ENCODE measurements at regions of chr2 and their contacts with region 1.

Region 1: GRCh38 chr2:142951190-142952007 is 73.9 kb downstream of the KYNU start:
- DNase-seq: no peak
- ATAC-seq: no peak
- H3K4me3 ChIP-seq: no peak overlapping the region
- H3K4me3 Mint-ChIP-seq: no peak overlapping the region
- H3K27ac ChIP-seq: no peak overlapping the region
- H3K27ac Mint-ChIP-seq: no peak overlapping the region
- H3K4me1 ChIP-seq: no peaks in the 10 kb centered on the region
- H3K4me1 Mint-ChIP-seq: peaks cover 16% of the 10 kb centered on the region
- H3K27me3 ChIP-seq: no peaks in the 10 kb centered on the region
- H3K27me3 Mint-ChIP-seq: no peaks in the 10 kb centered on the region
- CTCF ChIP-seq: no peak

Region 2: DNA sequence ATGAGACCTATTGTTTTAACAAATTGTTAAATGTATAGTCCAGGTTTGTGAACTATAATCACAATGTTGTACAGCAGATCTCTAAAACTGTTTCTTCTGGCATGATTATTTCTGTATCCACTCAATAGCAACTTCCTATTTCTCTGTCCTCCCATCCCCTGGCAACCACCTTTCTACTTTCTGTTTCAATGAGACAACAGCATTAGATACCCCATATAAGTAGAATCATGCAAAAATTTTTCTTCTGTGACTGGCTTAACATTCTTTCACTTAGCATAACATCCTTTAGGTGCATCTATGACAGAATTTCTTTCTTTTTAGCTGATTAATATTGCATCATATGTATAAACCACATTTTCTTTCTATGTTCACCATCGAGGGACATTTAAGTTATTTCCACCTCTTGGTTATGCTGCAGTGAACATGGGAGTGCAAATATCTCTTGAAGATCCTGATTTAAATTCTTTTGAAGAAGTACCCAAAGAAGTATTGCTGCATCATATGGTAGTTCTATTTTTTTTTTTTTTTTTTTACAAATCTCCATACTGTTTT is 1534.1 kb before region 1 on chr2:
- CTCF ChIA-PET with region 1: no interaction called
- POLR2A ChIA-PET with region 1: no interaction called
- intact Hi-C with region 1: loop called (anchors 10 kb)
- DNase-seq: peak; percentile 4
- ATAC-seq: no peak
- H3K4me3 ChIP-seq: no peak overlapping the region
- H3K4me3 Mint-ChIP-seq: no peak overlapping the region
- H3K27ac ChIP-seq: no peak overlapping the region
- H3K27ac Mint-ChIP-seq: no peak overlapping the region
- H3K4me1 ChIP-seq: no peaks in the 10 kb centered on the region
- H3K4me1 Mint-ChIP-seq: peaks cover 4% of the 10 kb centered on the region
- H3K27me3 ChIP-seq: no peaks in the 10 kb centered on the region
- H3K27me3 Mint-ChIP-seq: no peaks in the 10 kb centered on the region
- CTCF ChIP-seq: no peak

Region 3: GRCh38 chr2:142325870-142326269 is 625.5 kb before region 1 on chr2:
- CTCF ChIA-PET with region 1: no interaction called
- POLR2A ChIA-PET with region 1: no interaction called
- intact Hi-C with region 1: no loop called
- DNase-seq: no peak
- ATAC-seq: no peak
- H3K4me3 ChIP-seq: no peak overlapping the region
- H3K4me3 Mint-ChIP-seq: no peak overlapping the region
- H3K27ac ChIP-seq: no peak overlapping the region
- H3K27ac Mint-ChIP-seq: no peak overlapping the region
- H3K4me1 ChIP-seq: no peaks in the 10 kb centered on the region
- H3K4me1 Mint-ChIP-seq: no peaks in the 10 kb centered on the region
- H3K27me3 ChIP-seq: no peaks in the 10 kb centered on the region
- H3K27me3 Mint-ChIP-seq: no peaks in the 10 kb centered on the region
- CTCF ChIP-seq: no peak

Region 4: DNA sequence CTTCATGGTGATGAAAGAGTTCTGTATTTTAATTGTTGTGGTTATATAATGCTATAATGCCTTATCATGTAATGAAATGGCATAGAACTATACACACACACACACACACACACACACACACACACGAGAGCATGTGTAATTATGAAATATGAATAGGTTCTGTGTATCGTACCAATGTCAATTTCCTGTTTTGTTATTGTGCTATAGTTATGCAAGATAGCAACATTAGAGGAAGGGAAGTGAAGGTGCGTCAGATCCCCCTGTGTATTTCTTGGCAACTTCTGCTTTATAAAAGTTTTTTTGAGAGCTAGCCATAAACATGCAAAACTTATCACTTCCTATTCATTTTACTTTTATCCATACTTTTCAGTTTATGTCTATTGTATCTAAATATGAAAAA is 117.1 kb after region 1 on chr2:
- CTCF ChIA-PET with region 1: no interaction called
- POLR2A ChIA-PET with region 1: no interaction called
- intact Hi-C with region 1: no loop called
- DNase-seq: peak; percentile 76
- ATAC-seq: peak; percentile 94
- H3K4me3 ChIP-seq: no peak overlapping the region
- H3K4me3 Mint-ChIP-seq: peak overlapping the region; percentile 44
- H3K27ac ChIP-seq: no peak overlapping the region
- H3K27ac Mint-ChIP-seq: peak overlapping the region; percentile 80
- H3K4me1 ChIP-seq: peaks cover 3 to 4% of the 10 kb centered on the region in 2 donors
- H3K4me1 Mint-ChIP-seq: peaks cover 21% of the 10 kb centered on the region
- H3K27me3 ChIP-seq: peaks cover 0 to 2% (median 0%) of the 10 kb centered on the region in 4 experiments
- H3K27me3 Mint-ChIP-seq: peaks cover 3% of the 10 kb centered on the region
- CTCF ChIP-seq: no peak